ENCODE measurements at regions of chr14 and their contacts with region 1.

Region 1: DNA sequence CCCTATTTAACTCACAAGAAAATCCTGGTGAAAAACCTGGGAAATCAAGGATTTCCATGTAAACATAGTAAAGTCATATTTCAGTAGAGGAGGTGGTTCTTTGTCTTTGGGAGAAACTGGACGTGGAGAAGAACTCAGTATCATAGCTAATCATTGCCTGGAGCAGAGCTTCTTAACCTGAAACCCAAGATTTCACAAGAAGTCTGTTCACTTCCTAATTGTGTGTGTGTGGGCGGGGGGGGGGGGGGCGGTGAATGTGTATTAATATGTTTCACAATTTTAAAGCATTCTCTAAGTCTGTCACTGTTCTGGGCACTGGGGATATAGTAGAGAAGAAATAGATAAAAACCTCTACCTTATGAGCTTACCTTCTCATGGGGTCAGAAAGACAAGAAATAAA is 96.7 kb upstream of the PPP4R3A start:
- DNase-seq: no peak
- ATAC-seq: no peak
- H3K4me3 Mint-ChIP-seq: no peak overlapping the region
- H3K27ac Mint-ChIP-seq: no peak overlapping the region
- H3K4me1 Mint-ChIP-seq: no peaks in the 10 kb centered on the region
- H3K27me3 Mint-ChIP-seq: peaks cover 14% of the 10 kb centered on the region
- CTCF ChIP-seq: no peak

Region 2: DNA sequence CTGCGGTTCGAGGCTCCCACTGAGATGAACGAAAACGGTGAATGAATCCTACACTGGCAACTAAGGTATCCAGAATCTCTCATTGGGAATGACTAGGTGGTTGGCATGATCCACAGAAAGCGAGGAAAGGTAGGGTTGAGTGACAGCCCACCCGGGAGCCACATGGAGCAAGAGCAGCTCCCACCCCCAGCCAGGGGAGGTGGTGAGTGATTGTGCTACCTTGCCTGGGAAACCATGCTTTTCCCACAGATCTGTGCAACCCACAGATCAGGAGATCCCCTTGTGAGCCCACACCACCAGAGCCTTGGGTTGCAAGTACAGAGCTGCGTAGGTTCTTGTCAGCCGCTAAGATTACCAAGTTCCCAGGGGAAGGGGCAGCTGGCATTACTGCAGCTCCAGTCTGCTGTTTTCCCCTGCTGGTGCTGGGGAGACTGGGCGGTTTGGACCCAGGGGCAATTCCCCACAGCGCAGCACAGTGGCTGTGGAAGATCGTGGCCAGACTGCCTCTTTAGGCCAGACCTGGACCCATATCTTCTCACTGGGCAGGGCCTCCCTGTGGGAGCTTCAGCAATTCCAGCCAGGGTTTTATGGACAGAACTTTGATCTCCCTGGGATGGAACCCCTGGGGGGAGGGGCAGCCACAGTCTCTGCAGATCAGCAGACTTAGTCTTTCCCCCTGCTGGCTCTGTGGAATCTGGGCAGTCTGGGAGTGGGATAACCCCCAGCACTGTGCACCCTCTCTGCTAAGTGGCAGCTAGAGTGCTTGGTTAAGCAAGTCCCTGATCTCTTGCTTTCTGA is 52.1 kb before region 1 on chr14:
- CTCF ChIA-PET with region 1: no interaction called
- POLR2A ChIA-PET with region 1: no interaction called
- intact Hi-C with region 1: no loop called
- DNase-seq: no peak
- ATAC-seq: no peak
- H3K4me3 Mint-ChIP-seq: no peak overlapping the region
- H3K27ac Mint-ChIP-seq: no peak overlapping the region
- H3K4me1 Mint-ChIP-seq: no peaks in the 10 kb centered on the region
- H3K27me3 Mint-ChIP-seq: peaks cover 12% of the 10 kb centered on the region
- CTCF ChIP-seq: no peak

Region 3: GRCh38 chr14:91582747-91583146 is 24.1 kb before region 1 on chr14:
- CTCF ChIA-PET with region 1: interaction called, 3 read pairs
- POLR2A ChIA-PET with region 1: no interaction called
- intact Hi-C with region 1: loop called (anchors 1 kb)
- DNase-seq: no peak
- ATAC-seq: no peak
- H3K4me3 Mint-ChIP-seq: no peak overlapping the region
- H3K27ac Mint-ChIP-seq: no peak overlapping the region
- H3K4me1 Mint-ChIP-seq: no peaks in the 10 kb centered on the region
- H3K27me3 Mint-ChIP-seq: peaks cover 15% of the 10 kb centered on the region
- CTCF ChIP-seq: no peak

Measured in activated B cell treated with CpG ODN at 0.5 μM for 24 hours (primary cell).